Activated CD8-positive, alpha-beta T cell treated with anti-CD3 and anti-CD28 coated beads for 36 hours (primary cell): ENCODE measurements at regions of chr11 and their contacts with region 1.

Region 1: GRCh38 chr11:65711785-65712632 is at the start of gene KAT5:
- DNase-seq: peak; percentile 99
- ATAC-seq: peak; percentile 82
- H3K4me3 Mint-ChIP-seq: peak within 1 kb of the TSS; percentile 93
- H3K27ac Mint-ChIP-seq: peak within 1 kb of the TSS; percentile 98
- H3K4me1 Mint-ChIP-seq: peaks cover 20% of the 10 kb centered on the region
- H3K27me3 Mint-ChIP-seq: no peaks in the 10 kb centered on the region
- CTCF ChIP-seq: peak; percentile 93
- total RNA-seq, gene KAT5: 67.7 to 71.8 TPM

Region 2: DNA sequence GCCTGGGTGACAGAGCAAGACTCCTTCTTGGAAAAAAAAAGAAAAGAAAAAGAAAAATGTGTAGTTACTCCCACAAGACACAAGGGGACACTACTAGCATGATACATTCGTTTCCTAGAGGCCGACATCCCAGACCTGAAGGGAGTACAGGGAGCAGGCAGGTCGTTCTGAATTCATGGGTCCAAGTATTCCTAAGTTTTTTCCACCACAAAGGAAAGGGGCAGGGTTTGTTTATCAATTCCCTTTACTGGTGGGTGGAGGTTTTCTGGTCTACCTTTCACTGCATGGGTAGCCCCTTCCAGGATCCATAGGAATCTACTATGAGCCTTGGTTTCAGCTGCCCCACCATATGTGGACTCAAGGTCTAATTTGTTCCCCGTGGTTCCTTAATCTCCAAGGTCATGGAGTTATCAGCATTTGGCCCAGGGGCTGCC is 345.7 kb before region 1 on chr11:
- CTCF ChIA-PET with region 1: no interaction called
- POLR2A ChIA-PET with region 1: no interaction called
- intact Hi-C with region 1: no loop called
- DNase-seq: peak; percentile 38
- ATAC-seq: peak; percentile 94
- H3K4me3 Mint-ChIP-seq: no peak overlapping the region
- H3K27ac Mint-ChIP-seq: no peak overlapping the region
- H3K4me1 Mint-ChIP-seq: peaks cover 3% of the 10 kb centered on the region
- H3K27me3 Mint-ChIP-seq: no peaks in the 10 kb centered on the region
- CTCF ChIP-seq: peak; percentile 92

Region 3: GRCh38 chr11:65726660-65727059 is 14.7 kb after region 1 on chr11:
- CTCF ChIA-PET with region 1: interaction called, 27 read pairs
- POLR2A ChIA-PET with region 1: interaction called, 22 read pairs
- intact Hi-C with region 1: no loop called
- DNase-seq: no peak
- ATAC-seq: no peak
- H3K4me3 Mint-ChIP-seq: no peak overlapping the region
- H3K27ac Mint-ChIP-seq: no peak overlapping the region
- H3K4me1 Mint-ChIP-seq: no peaks in the 10 kb centered on the region
- H3K27me3 Mint-ChIP-seq: peaks cover 1% of the 10 kb centered on the region
- CTCF ChIP-seq: no peak

Region 4: GRCh38 chr11:65826962-65827735 is 115.1 kb after region 1 on chr11:
- CTCF ChIA-PET with region 1: interaction called, 12 read pairs
- POLR2A ChIA-PET with region 1: interaction called, 4 read pairs
- intact Hi-C with region 1: no loop called
- DNase-seq: no peak
- ATAC-seq: no peak
- H3K4me3 Mint-ChIP-seq: no peak overlapping the region
- H3K27ac Mint-ChIP-seq: no peak overlapping the region
- H3K4me1 Mint-ChIP-seq: peaks cover 28% of the 10 kb centered on the region
- H3K27me3 Mint-ChIP-seq: peaks cover 2% of the 10 kb centered on the region
- CTCF ChIP-seq: no peak